Heart right ventricle (tissue), 16 donors: ENCODE measurements at regions of chr5 and their contacts with region 1.

Region 1: DNA sequence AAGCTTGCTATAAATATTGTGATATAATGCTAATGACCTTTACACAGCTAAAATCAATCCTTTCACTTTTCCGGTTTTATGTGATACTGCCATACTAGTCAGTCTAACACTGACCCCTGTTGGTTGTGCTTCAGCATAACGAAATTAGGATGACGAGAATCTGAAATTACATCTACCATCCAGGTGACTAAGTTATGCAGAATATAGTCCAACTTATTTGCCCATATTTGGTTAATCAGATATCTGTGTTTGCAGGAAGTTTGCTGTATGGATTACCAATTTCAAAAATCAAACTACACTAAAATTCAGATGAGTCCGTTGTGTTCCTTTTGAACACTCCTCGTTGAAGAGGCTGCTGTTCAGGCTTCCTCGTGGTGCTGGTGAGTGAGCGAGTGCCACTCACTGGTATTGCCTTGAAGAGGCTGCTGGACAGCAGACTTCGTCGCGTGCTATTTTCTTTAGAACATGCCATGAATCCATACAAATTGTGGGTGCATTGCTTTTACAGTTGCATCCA is 32.5 kb downstream of the TENT4A start:
- DNase-seq: no peak
- ATAC-seq: peak; percentile 41 to 82 (median 64)
- H3K4me3 ChIP-seq: no peak overlapping the region
- H3K27ac ChIP-seq: peak overlapping the region in 3 of 10 donors; percentile 45 to 58 (median 49)
- H3K4me1 ChIP-seq: peaks cover 0 to 14% (median 8%) of the 10 kb centered on the region in 9 donors
- H3K27me3 ChIP-seq: no peaks in the 10 kb centered on the region
- CTCF ChIP-seq: peak; percentile 69 to 85 (median 81)

Region 2: DNA sequence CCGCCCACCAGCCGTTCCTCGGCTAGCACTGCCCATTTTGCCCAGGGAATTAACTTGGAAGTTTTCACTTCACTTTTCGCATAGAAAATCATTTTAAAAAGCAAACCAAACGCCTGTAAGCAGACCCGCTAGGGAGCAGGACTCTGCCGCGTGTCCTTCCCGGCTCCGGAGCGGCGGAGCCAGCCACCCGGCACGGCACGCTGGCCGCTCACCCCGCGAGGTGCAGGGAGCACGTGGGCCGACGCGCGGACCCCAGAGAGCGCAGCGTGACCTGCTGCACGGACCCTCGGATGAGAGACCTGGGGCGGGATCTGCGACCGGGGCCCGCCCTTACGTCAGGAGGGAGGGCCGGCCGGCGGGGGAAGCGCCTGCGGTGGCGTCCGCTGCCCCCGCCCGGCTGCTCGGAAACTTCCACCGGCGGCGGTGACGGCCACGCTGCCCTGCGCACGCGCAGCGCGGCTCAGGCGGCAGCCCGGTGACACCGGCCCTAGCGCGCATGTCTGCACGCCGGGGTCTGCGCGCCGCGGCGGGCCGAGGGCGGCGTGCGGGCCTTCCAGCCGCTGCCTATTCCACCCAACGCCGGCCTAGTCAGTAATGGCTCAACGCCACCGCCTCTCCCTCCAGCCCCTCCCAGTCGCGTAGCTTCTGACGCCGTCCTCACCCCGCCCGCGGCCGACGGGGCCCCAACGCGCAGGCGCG is 33.0 kb before region 1 on chr5:
- intact Hi-C with region 1: loop called in 1 of 10 experiments (anchors 5 kb)
- DNase-seq: peak; percentile 96 to 98
- ATAC-seq: peak; percentile 88 to 97 (median 92)
- H3K4me3 ChIP-seq: peak overlapping the region; percentile 51 to 97 (median 72)
- H3K27ac ChIP-seq: peak overlapping the region; percentile 93 to 98 (median 97)
- H3K4me1 ChIP-seq: peaks cover 5 to 47% (median 38%) of the 10 kb centered on the region in 9 donors
- H3K27me3 ChIP-seq: no peaks in the 10 kb centered on the region
- CTCF ChIP-seq: peak in 2 of 9 donors; percentile 1 to 23